ENCODE measurements at regions of chr7 and their contacts with region 1.

Region 1: DNA sequence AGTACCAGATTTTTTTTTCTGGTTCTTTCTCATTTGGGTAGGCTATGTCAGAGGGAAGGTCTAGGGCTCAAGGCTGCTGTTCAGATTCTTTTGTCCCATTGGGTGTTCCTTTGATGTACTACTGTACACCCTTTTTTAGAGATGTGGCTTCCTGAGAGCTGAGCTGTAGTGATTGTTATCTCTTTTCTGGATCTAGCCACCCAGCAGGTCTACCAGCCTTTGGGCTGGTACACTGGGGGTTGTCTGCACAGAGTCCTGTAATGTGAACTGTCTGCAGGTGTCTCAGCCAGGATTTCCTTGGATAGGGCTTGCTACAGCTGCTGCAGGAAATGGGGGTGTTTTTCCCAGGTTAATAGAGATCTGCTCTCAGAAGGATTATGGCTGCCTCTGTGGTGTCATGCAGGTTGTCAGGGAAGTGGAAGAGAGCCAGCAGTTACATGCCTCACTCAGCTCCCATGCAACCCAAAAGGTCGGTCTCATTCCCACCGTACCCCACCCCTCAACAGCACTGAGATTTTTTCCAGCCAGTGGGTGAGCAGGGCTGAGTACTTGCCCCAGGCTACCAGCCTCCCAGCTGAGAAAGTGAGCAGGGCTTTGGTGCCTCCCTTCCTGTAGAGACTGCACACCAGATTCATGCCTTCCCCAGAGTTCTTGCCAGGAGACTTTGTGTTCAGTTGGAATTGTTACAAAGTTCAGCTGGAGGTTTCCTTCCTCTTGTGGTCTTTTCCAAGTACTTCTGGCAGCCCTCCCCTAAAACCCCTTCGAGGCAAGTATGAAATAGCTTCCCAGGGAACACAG is 63.3 kb downstream of the ZNF107 start:
- DNase-seq: no peak
- ATAC-seq: no peak
- H3K4me3 ChIP-seq: no peak overlapping the region
- H3K27ac ChIP-seq: no peak overlapping the region
- H3K4me1 ChIP-seq: peaks cover 0 to 5% of the 10 kb centered on the region in 2 experiments; a peak in 2 of 4 replicates
- H3K27me3 ChIP-seq: no peaks in the 10 kb centered on the region
- CTCF ChIP-seq: no peak
- POLR2A ChIP-seq: no peak
- RAD21 ChIP-seq: no peak

Region 2: DNA sequence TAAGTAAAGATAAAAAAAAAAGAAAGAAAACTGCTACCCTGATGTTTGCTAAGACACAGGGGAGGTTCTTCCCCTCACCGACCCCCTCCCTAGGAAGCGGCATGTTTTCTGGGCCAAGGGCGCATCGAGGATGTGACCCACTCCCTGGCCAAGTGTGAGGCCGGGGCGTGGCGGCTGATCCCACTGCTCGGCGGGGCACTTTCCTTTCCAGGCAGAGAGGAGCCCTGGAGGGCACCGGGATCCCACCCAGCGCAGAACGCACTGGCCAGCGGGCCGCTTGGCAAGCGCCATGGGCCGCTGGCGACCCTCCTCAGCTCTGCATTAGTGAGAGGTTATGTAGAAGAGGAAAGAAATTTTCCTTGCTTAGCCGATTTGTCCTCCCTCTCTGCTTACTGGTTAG is 322.1 kb before region 1 on chr7:
- CTCF ChIA-PET with region 1: no interaction called
- POLR2A ChIA-PET with region 1: no interaction called
- RAD21 ChIA-PET with region 1: no interaction called
- intact Hi-C with region 1: loop called (anchors 10 kb)
- DNase-seq: no peak
- ATAC-seq: no peak
- H3K4me3 ChIP-seq: no peak overlapping the region
- H3K27ac ChIP-seq: no peak overlapping the region
- H3K4me1 ChIP-seq: no peaks in the 10 kb centered on the region
- H3K27me3 ChIP-seq: no peaks in the 10 kb centered on the region
- CTCF ChIP-seq: no peak
- POLR2A ChIP-seq: no peak
- RAD21 ChIP-seq: no peak

Region 3: DNA sequence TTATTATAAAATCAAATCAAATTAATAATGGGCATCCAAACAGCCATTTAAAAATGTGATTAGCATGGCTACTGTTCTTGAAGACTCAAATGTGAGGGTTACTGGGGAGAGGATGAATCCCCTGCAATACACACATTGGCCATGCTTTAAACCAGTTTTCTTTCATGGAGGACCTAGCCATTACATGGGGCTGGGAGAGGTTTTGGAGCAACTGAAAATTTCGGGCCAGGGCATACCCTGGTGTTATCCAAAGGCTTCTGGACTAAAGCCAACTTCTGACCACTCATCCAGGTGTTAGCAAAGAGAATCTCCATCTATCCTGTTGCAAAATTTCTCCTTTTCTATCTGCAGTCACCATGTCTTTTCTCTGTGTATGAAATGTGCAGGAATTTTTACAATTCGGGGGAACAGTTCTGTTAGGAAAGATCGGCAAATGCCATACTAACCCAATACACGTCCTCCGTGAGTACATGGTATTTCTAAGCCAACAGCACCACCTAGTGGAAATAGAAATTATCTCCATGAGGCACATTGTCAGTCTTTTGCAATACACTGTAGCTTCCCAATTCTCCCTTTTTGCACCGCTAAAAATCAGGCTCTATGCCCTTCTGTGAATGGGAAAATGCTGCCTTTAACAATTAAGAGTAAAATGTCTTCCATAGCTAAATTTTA is 110.3 kb before region 1 on chr7:
- CTCF ChIA-PET with region 1: no interaction called
- POLR2A ChIA-PET with region 1: no interaction called
- RAD21 ChIA-PET with region 1: no interaction called
- intact Hi-C with region 1: no loop called
- DNase-seq: peak; percentile 59
- ATAC-seq: peak; percentile 78
- H3K4me3 ChIP-seq: no peak overlapping the region
- H3K27ac ChIP-seq: no peak overlapping the region
- H3K4me1 ChIP-seq: no peaks in the 10 kb centered on the region
- H3K27me3 ChIP-seq: no peaks in the 10 kb centered on the region
- CTCF ChIP-seq: peak; percentile 10 to 79 (median 44); a peak in 3 of 6 replicates
- POLR2A ChIP-seq: no peak
- RAD21 ChIP-seq: peak; percentile 72

Region 4: DNA sequence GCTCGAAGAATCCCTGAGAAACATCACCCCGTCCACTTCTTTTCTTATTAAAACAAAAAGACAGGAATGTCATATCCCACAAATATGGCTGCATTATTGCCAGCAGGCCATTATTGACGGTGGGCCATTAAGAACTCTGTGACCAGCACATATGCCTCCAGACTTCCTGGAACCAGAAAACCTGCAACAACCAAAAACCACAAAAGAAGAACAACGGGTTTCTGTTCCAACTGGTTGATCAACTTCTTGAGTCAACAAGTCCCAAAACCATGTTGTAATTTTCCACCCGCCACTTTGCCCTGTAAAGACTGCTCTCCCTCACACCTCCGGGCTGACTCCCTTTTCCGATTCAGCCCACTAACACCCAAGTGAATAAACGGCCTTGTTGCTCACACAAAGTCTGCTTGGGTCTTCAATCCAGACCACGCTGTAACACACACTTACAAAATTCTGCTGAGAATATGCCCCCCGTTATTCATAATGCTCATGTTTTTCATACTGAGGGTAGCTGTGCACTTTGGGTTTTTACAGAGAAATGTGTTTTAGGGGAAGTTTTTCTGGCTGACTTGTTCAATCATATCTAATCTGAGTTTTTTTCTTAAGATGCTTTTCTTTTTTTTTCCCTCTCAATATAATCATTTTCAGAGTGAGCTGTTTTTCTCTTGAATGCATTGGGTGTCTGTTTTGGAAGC is 42.6 kb before region 1 on chr7:
- CTCF ChIA-PET with region 1: no interaction called
- POLR2A ChIA-PET with region 1: no interaction called
- RAD21 ChIA-PET with region 1: no interaction called
- intact Hi-C with region 1: loop called (anchors 5 kb)
- DNase-seq: no peak
- ATAC-seq: no peak
- H3K4me3 ChIP-seq: no peak overlapping the region
- H3K27ac ChIP-seq: peak overlapping the region; percentile 15; the same call in 1 of the 2 replicates
- H3K4me1 ChIP-seq: peaks cover 0 to 8% of the 10 kb centered on the region in 2 experiments; a peak in 1 of 4 replicates
- H3K27me3 ChIP-seq: no peaks in the 10 kb centered on the region
- CTCF ChIP-seq: no peak
- POLR2A ChIP-seq: no peak
- RAD21 ChIP-seq: no peak

Measured in HCT116 (cell line).